ENCODE measurements at regions of chr1 and their contacts with region 1.

Region 1: DNA sequence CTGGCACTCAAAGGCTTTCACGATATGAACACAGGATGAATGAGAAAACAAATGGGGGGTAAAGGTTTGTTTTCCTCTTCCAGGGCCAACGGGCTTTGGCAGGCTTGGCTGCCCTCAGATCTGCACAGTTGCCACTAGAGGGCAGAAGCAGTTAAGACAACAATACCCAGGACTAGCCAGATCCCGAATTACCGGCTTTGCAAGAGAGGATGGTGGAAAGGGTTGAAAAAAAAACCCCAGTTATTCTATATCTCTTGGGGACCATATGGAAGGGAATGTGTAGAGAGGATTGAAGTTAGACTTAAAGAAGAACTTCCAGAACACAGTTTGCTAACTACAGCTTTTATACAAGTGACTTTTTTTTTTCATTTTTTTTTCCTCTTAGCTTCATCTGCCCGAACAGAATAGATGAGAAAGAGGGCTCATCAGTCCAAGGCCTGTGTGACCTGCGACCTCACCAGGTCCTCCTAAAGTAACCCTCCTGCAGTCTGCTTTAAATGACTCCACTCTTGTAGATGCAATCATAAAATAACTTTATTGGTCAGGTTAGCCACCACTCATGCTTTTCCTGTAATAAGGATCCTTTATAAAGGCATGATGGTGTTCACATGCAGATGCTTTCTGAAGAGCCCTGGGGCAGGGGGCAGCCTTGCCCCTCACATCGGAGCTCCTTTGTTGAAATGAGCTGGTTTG is 10.7 kb downstream of the FMOD start:
- DNase-seq: peak; percentile 92
- H3K4me3 Mint-ChIP-seq: no peak overlapping the region
- H3K27ac Mint-ChIP-seq: no peak overlapping the region
- H3K4me1 Mint-ChIP-seq: peaks cover 6% of the 10 kb centered on the region
- H3K27me3 Mint-ChIP-seq: peaks cover 56% of the 10 kb centered on the region
- CTCF ChIP-seq: peak; percentile 95

Region 2: GRCh38 chr1:202888221-202888530 is 452.1 kb before region 1 on chr1:
- CTCF ChIA-PET with region 1: no interaction called
- POLR2A ChIA-PET with region 1: no interaction called
- intact Hi-C with region 1: no loop called
- DNase-seq: peak; percentile 68
- H3K4me3 Mint-ChIP-seq: peak overlapping the region; percentile 97
- H3K27ac Mint-ChIP-seq: peak overlapping the region; percentile 88
- H3K4me1 Mint-ChIP-seq: peaks cover 7% of the 10 kb centered on the region
- H3K27me3 Mint-ChIP-seq: no peaks in the 10 kb centered on the region
- CTCF ChIP-seq: no peak

Region 3: GRCh38 chr1:202938287-202938925 is 401.9 kb before region 1 on chr1:
- CTCF ChIA-PET with region 1: no interaction called
- POLR2A ChIA-PET with region 1: no interaction called
- intact Hi-C with region 1: no loop called
- DNase-seq: no peak
- H3K4me3 Mint-ChIP-seq: no peak overlapping the region
- H3K27ac Mint-ChIP-seq: no peak overlapping the region
- H3K4me1 Mint-ChIP-seq: no peaks in the 10 kb centered on the region
- H3K27me3 Mint-ChIP-seq: peaks cover 16% of the 10 kb centered on the region
- CTCF ChIP-seq: no peak

Region 4: GRCh38 chr1:203038891-203039608 is 301.2 kb before region 1 on chr1:
- CTCF ChIA-PET with region 1: interaction called, 11 read pairs
- POLR2A ChIA-PET with region 1: no interaction called
- intact Hi-C with region 1: no loop called
- DNase-seq: peak; percentile 90
- H3K4me3 Mint-ChIP-seq: no peak overlapping the region
- H3K27ac Mint-ChIP-seq: no peak overlapping the region
- H3K4me1 Mint-ChIP-seq: peaks cover 18% of the 10 kb centered on the region
- H3K27me3 Mint-ChIP-seq: no peaks in the 10 kb centered on the region
- CTCF ChIP-seq: peak; percentile 100

Region 5: GRCh38 chr1:203185061-203185461 is 155.2 kb before region 1 on chr1:
- CTCF ChIA-PET with region 1: no interaction called
- POLR2A ChIA-PET with region 1: no interaction called
- intact Hi-C with region 1: no loop called
- DNase-seq: no peak
- H3K4me3 Mint-ChIP-seq: no peak overlapping the region
- H3K27ac Mint-ChIP-seq: no peak overlapping the region
- H3K4me1 Mint-ChIP-seq: peaks cover 13% of the 10 kb centered on the region
- H3K27me3 Mint-ChIP-seq: peaks cover 28% of the 10 kb centered on the region
- CTCF ChIP-seq: no peak

Region 6: GRCh38 chr1:203290261-203291089 is 49.8 kb before region 1 on chr1:
- CTCF ChIA-PET with region 1: interaction called, 980 read pairs
- POLR2A ChIA-PET with region 1: no interaction called
- intact Hi-C with region 1: no loop called
- DNase-seq: peak; percentile 47
- H3K4me3 Mint-ChIP-seq: no peak overlapping the region
- H3K27ac Mint-ChIP-seq: no peak overlapping the region
- H3K4me1 Mint-ChIP-seq: no peaks in the 10 kb centered on the region
- H3K27me3 Mint-ChIP-seq: no peaks in the 10 kb centered on the region
- CTCF ChIP-seq: no peak

Region 7: GRCh38 chr1:203351037-203352013 is 11.1 kb after region 1 on chr1 and contains the start of gene FMOD:
- CTCF ChIA-PET with region 1: interaction called, 422 read pairs
- POLR2A ChIA-PET with region 1: interaction called, 4 read pairs
- intact Hi-C with region 1: no loop called
- DNase-seq: peak; percentile 23
- H3K4me3 Mint-ChIP-seq: no peak within 1 kb of the TSS
- H3K27ac Mint-ChIP-seq: no peak within 1 kb of the TSS
- H3K4me1 Mint-ChIP-seq: no peaks in the 10 kb centered on the region
- H3K27me3 Mint-ChIP-seq: peaks cover 93% of the 10 kb centered on the region
- CTCF ChIP-seq: peak; percentile 19
- total RNA-seq, gene FMOD: not detected in 2 replicates

Region 8: DNA sequence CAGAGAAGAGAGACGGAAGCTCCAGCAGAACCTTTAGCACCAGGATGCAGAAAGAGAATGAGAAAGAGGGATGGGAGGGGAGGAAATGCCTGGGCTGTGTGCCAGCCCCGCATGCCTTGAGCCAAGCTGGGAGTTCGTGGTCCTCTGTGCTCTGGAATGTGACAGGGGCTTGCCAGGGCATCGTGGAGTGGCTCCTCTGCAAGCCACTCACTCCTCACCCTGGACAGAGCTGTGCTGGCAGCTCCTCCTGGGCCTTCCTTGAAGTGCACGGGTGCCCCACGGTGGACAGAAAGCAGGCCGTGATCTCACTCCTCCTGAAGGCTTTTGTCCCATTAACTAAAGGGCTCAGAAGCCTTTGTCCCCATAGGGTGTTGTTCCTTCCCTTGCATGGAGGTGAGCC is 100.5 kb after region 1 on chr1:
- CTCF ChIA-PET with region 1: interaction called, 19 read pairs
- POLR2A ChIA-PET with region 1: no interaction called
- intact Hi-C with region 1: loop called (anchors 1 kb)
- DNase-seq: peak; percentile 61
- H3K4me3 Mint-ChIP-seq: no peak overlapping the region
- H3K27ac Mint-ChIP-seq: no peak overlapping the region
- H3K4me1 Mint-ChIP-seq: no peaks in the 10 kb centered on the region
- H3K27me3 Mint-ChIP-seq: peaks cover 66% of the 10 kb centered on the region
- CTCF ChIP-seq: peak; percentile 48

Region 9: DNA sequence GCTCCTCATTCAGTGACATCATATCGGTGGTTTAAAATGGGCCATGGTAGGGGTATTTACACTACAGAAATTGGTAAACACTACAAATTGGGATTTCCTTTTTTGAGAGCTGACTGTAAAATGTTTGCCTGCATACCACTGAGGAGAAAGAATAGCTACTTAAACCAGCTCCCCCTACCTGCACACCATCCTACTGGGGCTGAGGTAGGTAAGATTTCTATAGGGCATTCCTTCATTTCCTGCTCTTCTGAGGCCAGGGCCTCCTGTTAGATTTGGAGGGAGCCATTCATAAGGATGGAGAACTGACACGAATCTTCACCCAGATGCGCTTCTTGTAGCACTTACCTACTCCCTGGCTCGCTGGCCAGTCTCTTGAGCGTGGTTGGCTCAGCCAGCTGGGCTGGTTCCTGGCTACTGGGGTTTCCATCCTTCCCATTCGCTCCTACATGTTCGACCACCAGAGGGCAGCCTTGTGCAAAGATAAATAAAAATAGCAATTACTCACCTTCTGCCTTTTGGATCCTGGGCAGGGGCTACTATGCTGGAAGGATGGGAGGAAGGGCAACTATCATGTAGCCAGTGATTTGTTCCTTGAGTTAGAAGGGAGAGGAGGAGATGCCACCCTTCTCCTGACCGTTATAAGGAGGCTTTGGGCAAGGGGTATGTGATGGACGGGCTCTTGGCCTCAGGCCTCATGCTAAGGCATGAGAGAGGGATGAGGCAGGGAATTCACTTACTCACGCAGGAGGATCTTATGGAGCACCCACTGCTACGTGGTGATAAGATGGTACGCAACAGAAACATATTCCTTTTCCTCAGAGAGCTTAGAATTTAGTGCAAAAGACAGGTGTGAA is 164.4 kb after region 1 on chr1:
- CTCF ChIA-PET with region 1: interaction called, 981 read pairs
- POLR2A ChIA-PET with region 1: interaction called, 4 read pairs
- intact Hi-C with region 1: no loop called
- DNase-seq: peak; percentile 96
- H3K4me3 Mint-ChIP-seq: no peak overlapping the region
- H3K27ac Mint-ChIP-seq: no peak overlapping the region
- H3K4me1 Mint-ChIP-seq: peaks cover 22% of the 10 kb centered on the region
- H3K27me3 Mint-ChIP-seq: peaks cover 22% of the 10 kb centered on the region
- CTCF ChIP-seq: peak; percentile 94